ENCODE measurements at regions of chr16 and their contacts with region 1.

Region 1: GRCh38 chr16:87778830-87779579 is 13.2 kb upstream of the KLHDC4 start:
- DNase-seq: peak; percentile 87 to 94 (median 88)
- H3K4me3 ChIP-seq: no peak overlapping the region
- H3K4me3 Mint-ChIP-seq: peak overlapping the region; percentile 20 to 90 (median 66)
- H3K27ac ChIP-seq: no peak overlapping the region
- H3K27ac Mint-ChIP-seq: peak overlapping the region; percentile 93 to 97 (median 95)
- H3K4me1 ChIP-seq: peaks cover 42% of the 10 kb centered on the region
- H3K4me1 Mint-ChIP-seq: peaks cover 23 to 43% (median 35%) of the 10 kb centered on the region in 4 donors
- H3K27me3 ChIP-seq: no peaks in the 10 kb centered on the region
- H3K27me3 Mint-ChIP-seq: no peaks in the 10 kb centered on the region

Region 2: DNA sequence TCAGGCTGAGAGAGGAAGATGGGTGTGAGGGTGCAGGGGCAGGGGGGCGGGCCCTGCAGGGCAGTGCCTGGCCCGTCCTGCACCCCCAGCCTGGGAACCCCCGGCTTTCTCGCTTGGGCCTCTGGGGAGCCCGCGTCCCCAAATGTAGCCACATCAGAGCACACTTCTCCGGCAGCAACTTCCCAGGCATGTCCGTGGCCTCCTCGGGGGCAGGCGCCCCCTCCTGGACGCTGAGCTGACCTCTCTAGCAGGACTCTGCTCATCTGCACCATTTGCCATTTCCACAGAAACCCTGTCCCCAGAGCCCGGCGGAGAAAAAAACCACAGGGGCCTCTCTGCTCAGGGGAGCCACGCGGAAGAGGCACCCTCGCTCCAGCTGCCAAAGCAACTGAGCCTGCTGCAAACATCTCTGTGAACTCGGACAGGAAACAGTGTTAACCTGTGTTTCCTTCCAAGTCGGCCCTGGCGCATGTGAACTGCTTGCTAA is 76.6 kb before region 1 on chr16:
- CTCF ChIA-PET with region 1: no interaction called
- POLR2A ChIA-PET with region 1: no interaction called
- intact Hi-C with region 1: no loop called
- DNase-seq: peak in 3 of 5 donors; percentile 11 to 29 (median 24)
- H3K4me3 ChIP-seq: no peak overlapping the region
- H3K4me3 Mint-ChIP-seq: peak overlapping the region in 7 of 8 donors; percentile 15 to 71 (median 63)
- H3K27ac ChIP-seq: no peak overlapping the region
- H3K27ac Mint-ChIP-seq: peak overlapping the region; percentile 60 to 94 (median 86)
- H3K4me1 ChIP-seq: peaks cover 47% of the 10 kb centered on the region
- H3K4me1 Mint-ChIP-seq: peaks cover 28 to 65% (median 38%) of the 10 kb centered on the region in 4 donors
- H3K27me3 ChIP-seq: no peaks in the 10 kb centered on the region
- H3K27me3 Mint-ChIP-seq: no peaks in the 10 kb centered on the region

Region 3: DNA sequence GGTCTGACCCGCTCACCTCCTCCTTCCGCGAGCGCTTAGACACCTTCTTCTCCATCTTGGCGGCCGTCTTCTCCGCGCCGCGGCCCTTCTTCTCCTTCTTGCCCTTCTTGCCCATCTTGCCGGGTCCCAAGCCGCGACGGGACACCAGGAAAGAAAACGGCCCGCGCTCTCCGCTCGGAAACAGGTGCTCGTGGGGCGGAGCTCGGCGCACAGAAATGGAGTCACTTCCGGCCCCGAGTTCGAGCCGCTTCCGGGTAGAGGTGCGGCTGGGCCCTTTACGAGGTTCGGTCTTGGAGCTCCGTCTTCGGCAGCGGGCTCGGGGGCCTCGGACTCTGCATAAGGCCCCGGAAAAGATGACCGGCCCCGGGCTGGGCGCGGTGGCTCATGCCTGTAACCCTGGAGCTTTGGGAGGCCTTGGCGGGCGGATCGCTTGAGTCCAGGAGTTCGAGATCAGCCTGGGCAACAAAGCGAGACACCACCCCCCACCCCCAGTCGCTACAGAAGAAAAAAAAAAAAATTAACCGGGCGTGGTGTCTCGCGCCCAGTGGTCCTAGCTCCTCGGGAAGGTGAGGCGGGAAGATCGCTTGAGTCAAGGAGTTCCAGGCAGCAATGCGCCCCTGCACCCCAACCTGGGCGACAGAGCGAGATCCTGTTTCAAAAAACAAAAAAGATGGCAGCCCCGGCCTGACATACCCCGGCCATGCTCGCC is 13.1 kb before region 1 on chr16 and contains the start of gene KLHDC4:
- CTCF ChIA-PET with region 1: interaction called, 34 read pairs
- POLR2A ChIA-PET with region 1: interaction called, 23 read pairs
- intact Hi-C with region 1: no loop called
- DNase-seq: peak; percentile 87 to 91 (median 88)
- H3K4me3 ChIP-seq: peak within 1 kb of the TSS; percentile 7 to 80
- H3K4me3 Mint-ChIP-seq: peak within 1 kb of the TSS; percentile 97 to 100 (median 100)
- H3K27ac ChIP-seq: peak within 1 kb of the TSS; percentile 85
- H3K27ac Mint-ChIP-seq: peak within 1 kb of the TSS; percentile 98 to 100 (median 99)
- H3K4me1 ChIP-seq: peaks cover 44% of the 10 kb centered on the region
- H3K4me1 Mint-ChIP-seq: peaks cover 25 to 51% (median 39%) of the 10 kb centered on the region in 4 donors
- H3K27me3 ChIP-seq: no peaks in the 10 kb centered on the region
- H3K27me3 Mint-ChIP-seq: no peaks in the 10 kb centered on the region
- total RNA-seq, gene KLHDC4: 82.4 to 90.0 TPM

Region 4: GRCh38 chr16:87806603-87807546 is 27.9 kb after region 1 on chr16:
- CTCF ChIA-PET with region 1: interaction called, 25 read pairs
- POLR2A ChIA-PET with region 1: interaction called, 12 read pairs
- intact Hi-C with region 1: loop called (anchors 2 kb)
- DNase-seq: peak in 4 of 5 donors; percentile 13 to 23 (median 18)
- H3K4me3 ChIP-seq: peak overlapping the region in 1 of 2 donors; percentile 34
- H3K4me3 Mint-ChIP-seq: peak overlapping the region; percentile 77 to 96 (median 86)
- H3K27ac ChIP-seq: no peak overlapping the region
- H3K27ac Mint-ChIP-seq: peak overlapping the region; percentile 48 to 82 (median 72)
- H3K4me1 ChIP-seq: peaks cover 17% of the 10 kb centered on the region
- H3K4me1 Mint-ChIP-seq: peaks cover 4 to 13% (median 9%) of the 10 kb centered on the region in 4 donors
- H3K27me3 ChIP-seq: no peaks in the 10 kb centered on the region
- H3K27me3 Mint-ChIP-seq: no peaks in the 10 kb centered on the region

Region 5: DNA sequence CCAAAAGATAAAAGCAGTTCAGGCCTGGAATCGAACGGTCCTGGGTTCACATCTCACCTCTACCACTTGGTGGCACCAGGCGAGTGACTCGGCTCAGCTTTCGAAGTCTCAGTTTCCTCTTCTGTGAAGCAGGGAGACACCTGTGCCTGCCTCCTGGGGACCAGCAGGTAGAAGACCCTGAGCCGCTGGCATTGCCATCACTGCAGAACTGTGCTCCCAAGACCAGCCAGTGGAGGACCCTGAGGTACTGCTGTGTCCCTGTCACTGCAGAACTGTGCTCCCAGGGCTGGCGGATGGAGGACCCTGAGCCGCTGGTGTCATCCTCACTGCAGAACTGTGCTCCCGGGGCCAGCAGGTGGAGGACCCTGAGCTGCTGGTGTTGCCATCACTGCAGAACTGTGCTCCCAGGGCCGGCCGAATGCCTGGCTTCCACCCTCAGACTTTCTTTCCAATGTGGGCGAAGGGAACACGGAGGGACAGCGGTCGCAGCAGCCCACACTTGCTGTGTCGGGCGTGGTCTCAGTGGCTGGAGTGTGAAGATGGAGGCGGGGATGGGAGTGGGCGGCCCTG is 99.0 kb after region 1 on chr16:
- CTCF ChIA-PET with region 1: interaction called, 337 read pairs
- POLR2A ChIA-PET with region 1: interaction called, 16 read pairs
- intact Hi-C with region 1: no loop called
- DNase-seq: no peak
- H3K4me3 ChIP-seq: no peak overlapping the region
- H3K4me3 Mint-ChIP-seq: no peak overlapping the region
- H3K27ac ChIP-seq: no peak overlapping the region
- H3K27ac Mint-ChIP-seq: no peak overlapping the region
- H3K4me1 ChIP-seq: peaks cover 13% of the 10 kb centered on the region
- H3K4me1 Mint-ChIP-seq: peaks cover 6 to 11% (median 9%) of the 10 kb centered on the region in 4 donors
- H3K27me3 ChIP-seq: no peaks in the 10 kb centered on the region
- H3K27me3 Mint-ChIP-seq: peaks cover 2% of the 10 kb centered on the region in 2 donors

Region 6: GRCh38 chr16:87914812-87915211 is 135.8 kb after region 1 on chr16:
- CTCF ChIA-PET with region 1: interaction called, 26 read pairs
- POLR2A ChIA-PET with region 1: interaction called, 3 read pairs
- intact Hi-C with region 1: no loop called
- DNase-seq: no peak
- H3K4me3 ChIP-seq: no peak overlapping the region
- H3K4me3 Mint-ChIP-seq: no peak overlapping the region
- H3K27ac ChIP-seq: no peak overlapping the region
- H3K27ac Mint-ChIP-seq: no peak overlapping the region
- H3K4me1 ChIP-seq: no peaks in the 10 kb centered on the region
- H3K4me1 Mint-ChIP-seq: no peaks in the 10 kb centered on the region
- H3K27me3 ChIP-seq: no peaks in the 10 kb centered on the region
- H3K27me3 Mint-ChIP-seq: peaks cover 4 to 5% of the 10 kb centered on the region in 2 donors